Naive thymus-derived CD4-positive, alpha-beta T cell (primary cell): ENCODE measurements at regions of chr14 and their contacts with region 1.

Region 1: GRCh38 chr14:36585100-36585499 is 2.7 kb upstream of the NKX2-8 start:
- DNase-seq: no peak
- ATAC-seq: no peak
- H3K4me3 ChIP-seq: no peak overlapping the region
- H3K4me3 Mint-ChIP-seq: no peak overlapping the region
- H3K27ac ChIP-seq: no peak overlapping the region
- H3K27ac Mint-ChIP-seq: no peak overlapping the region
- H3K4me1 ChIP-seq: no peaks in the 10 kb centered on the region
- H3K4me1 Mint-ChIP-seq: peaks cover 0 to 3% (median 0%) of the 10 kb centered on the region in 7 donors
- H3K27me3 ChIP-seq: peaks cover 0 to 10% of the 10 kb centered on the region in 2 donors
- H3K27me3 Mint-ChIP-seq: peaks cover 53 to 81% (median 61%) of the 10 kb centered on the region in 5 donors

Region 2: DNA sequence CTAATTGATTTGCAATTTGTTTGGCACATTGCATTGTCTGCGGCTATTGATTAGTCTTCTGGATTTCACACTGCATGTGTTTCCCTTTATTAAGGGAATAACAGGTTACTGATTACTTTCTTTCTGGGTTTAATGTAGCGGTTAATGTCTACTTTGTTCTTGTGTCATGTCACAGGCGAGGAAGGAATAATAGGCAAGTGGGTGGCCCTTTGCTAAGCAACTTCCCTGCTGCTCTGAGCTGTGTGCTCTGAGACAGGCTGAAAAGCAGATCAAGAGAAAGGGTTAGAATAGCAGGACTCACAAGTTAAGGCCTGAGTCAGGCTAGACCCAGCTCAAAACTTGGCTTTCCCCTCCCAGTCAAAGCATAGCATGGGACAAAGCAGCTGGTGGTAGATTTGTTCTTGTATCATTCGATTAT is 142.3 kb before region 1 on chr14:
- CTCF ChIA-PET with region 1: no interaction called
- POLR2A ChIA-PET with region 1: no interaction called
- intact Hi-C with region 1: no loop called
- DNase-seq: no peak
- ATAC-seq: no peak
- H3K4me3 ChIP-seq: no peak overlapping the region
- H3K4me3 Mint-ChIP-seq: no peak overlapping the region
- H3K27ac ChIP-seq: no peak overlapping the region
- H3K27ac Mint-ChIP-seq: no peak overlapping the region
- H3K4me1 ChIP-seq: no peaks in the 10 kb centered on the region
- H3K4me1 Mint-ChIP-seq: no peaks in the 10 kb centered on the region
- H3K27me3 ChIP-seq: no peaks in the 10 kb centered on the region
- H3K27me3 Mint-ChIP-seq: peaks cover 10 to 34% (median 26%) of the 10 kb centered on the region in 5 donors

Region 3: GRCh38 chr14:36570065-36570464 is 15.0 kb before region 1 on chr14:
- CTCF ChIA-PET with region 1: no interaction called
- POLR2A ChIA-PET with region 1: no interaction called
- intact Hi-C with region 1: no loop called
- DNase-seq: no peak
- ATAC-seq: no peak
- H3K4me3 ChIP-seq: no peak overlapping the region
- H3K4me3 Mint-ChIP-seq: no peak overlapping the region
- H3K27ac ChIP-seq: no peak overlapping the region
- H3K27ac Mint-ChIP-seq: no peak overlapping the region
- H3K4me1 ChIP-seq: no peaks in the 10 kb centered on the region
- H3K4me1 Mint-ChIP-seq: peaks cover 0 to 2% (median 0%) of the 10 kb centered on the region in 7 donors
- H3K27me3 ChIP-seq: no peaks in the 10 kb centered on the region
- H3K27me3 Mint-ChIP-seq: peaks cover 6 to 16% (median 9%) of the 10 kb centered on the region in 5 donors

Region 4: GRCh38 chr14:36647824-36648753 is 63.0 kb after region 1 on chr14:
- CTCF ChIA-PET with region 1: no interaction called
- POLR2A ChIA-PET with region 1: no interaction called
- intact Hi-C with region 1: loop called in 1 of 2 experiments (anchors 5 kb)
- DNase-seq: no peak
- ATAC-seq: no peak
- H3K4me3 ChIP-seq: no peak overlapping the region
- H3K4me3 Mint-ChIP-seq: peak overlapping the region in 3 of 10 donors; percentile 22 to 47 (median 38)
- H3K27ac ChIP-seq: no peak overlapping the region
- H3K27ac Mint-ChIP-seq: peak overlapping the region in 1 of 9 donors; percentile 2
- H3K4me1 ChIP-seq: no peaks in the 10 kb centered on the region
- H3K4me1 Mint-ChIP-seq: peaks cover 0 to 9% (median 5%) of the 10 kb centered on the region in 7 donors
- H3K27me3 ChIP-seq: peaks cover 0 to 14% of the 10 kb centered on the region in 2 donors
- H3K27me3 Mint-ChIP-seq: peaks cover 69 to 79% (median 73%) of the 10 kb centered on the region in 5 donors

Region 5: DNA sequence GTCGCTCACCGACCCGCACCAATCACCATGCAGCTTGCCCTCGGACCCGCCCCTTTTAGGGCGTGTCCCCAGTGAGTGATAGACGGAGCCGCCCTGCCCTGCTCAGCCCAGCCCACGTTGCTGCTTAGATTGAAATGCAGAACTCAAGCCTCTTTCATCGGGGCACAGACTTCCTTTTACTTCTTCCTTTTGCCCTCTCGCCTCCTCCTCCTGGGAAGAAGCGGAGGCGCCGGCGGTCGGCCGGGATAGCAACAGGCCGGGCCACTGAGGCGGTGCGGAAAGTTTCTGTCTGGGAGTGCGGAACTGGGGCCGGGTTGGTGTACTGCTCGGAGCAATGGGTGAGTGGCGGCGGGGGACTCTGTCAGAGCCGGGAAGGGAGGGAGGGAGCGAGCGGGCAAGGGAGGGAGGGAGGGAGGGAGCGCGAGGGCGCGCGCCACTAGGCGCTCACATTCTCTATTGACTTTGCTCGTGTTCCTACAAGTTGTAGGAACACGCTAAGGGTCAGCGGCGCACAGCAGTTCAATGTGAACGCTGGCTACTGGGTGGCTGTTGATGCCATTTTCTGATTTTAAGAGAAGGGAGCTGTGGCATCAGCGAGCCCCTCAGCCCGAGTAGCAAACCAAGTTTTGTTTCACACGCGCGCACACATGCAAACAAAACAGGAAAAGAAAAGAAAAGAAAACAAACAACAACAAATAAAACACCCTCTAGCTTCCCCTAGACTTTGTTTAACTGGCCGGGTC is 76.8 kb after region 1 on chr14 and contains the start of gene PAX9:
- CTCF ChIA-PET with region 1: no interaction called
- POLR2A ChIA-PET with region 1: no interaction called
- intact Hi-C with region 1: loop called in 1 of 2 experiments (anchors 2 kb)
- DNase-seq: peak in 2 of 9 donors; percentile 9 to 10
- ATAC-seq: peak; percentile 59
- H3K4me3 ChIP-seq: no peak within 1 kb of the TSS
- H3K4me3 Mint-ChIP-seq: peak within 1 kb of the TSS; percentile 39 to 77 (median 66)
- H3K27ac ChIP-seq: no peak within 1 kb of the TSS
- H3K27ac Mint-ChIP-seq: peak within 1 kb of the TSS in 1 of 9 donors; percentile 77
- H3K4me1 ChIP-seq: peaks cover 0 to 13% of the 10 kb centered on the region in 2 donors
- H3K4me1 Mint-ChIP-seq: peaks cover 14 to 64% (median 54%) of the 10 kb centered on the region in 7 donors
- H3K27me3 ChIP-seq: peaks cover 7 to 11% of the 10 kb centered on the region in 2 donors
- H3K27me3 Mint-ChIP-seq: peaks cover 75 to 97% (median 85%) of the 10 kb centered on the region in 5 donors
- total RNA-seq, gene PAX9: not detected